Activated CD4-positive, alpha-beta T cell treated with anti-CD3 and anti-CD28 coated beads for 36 hours (primary cell): ENCODE measurements at regions of chr9 and their contacts with region 1.

Region 1: GRCh38 chr9:9585920-9586319 is 1026.9 kb downstream of the PTPRD start:
- DNase-seq: no peak
- ATAC-seq: no peak
- H3K4me3 Mint-ChIP-seq: no peak overlapping the region
- H3K27ac Mint-ChIP-seq: no peak overlapping the region
- H3K4me1 Mint-ChIP-seq: no peaks in the 10 kb centered on the region
- H3K27me3 Mint-ChIP-seq: no peaks in the 10 kb centered on the region

Region 2: DNA sequence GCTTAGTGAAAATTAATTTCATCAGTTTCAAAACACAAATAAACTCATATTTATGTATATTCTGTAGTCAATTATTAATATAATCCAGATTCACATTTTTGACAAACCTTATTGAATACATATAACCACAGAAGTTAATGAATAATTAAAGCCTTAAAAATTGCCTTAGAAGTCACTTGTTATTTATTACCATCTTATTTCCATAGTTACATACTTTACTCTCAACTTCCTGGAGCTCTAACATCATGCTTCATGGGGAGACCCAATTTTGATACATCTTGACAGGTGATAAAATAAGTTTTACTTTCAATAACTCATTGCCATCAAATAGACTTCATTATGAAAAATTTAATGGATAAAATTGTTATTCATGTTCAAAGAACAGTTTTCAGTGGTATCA is 11.8 kb before region 1 on chr9:
- CTCF ChIA-PET with region 1: no interaction called
- POLR2A ChIA-PET with region 1: no interaction called
- intact Hi-C with region 1: loop called in 1 of 2 experiments (anchors 1 kb)
- DNase-seq: no peak
- ATAC-seq: no peak
- H3K4me3 Mint-ChIP-seq: no peak overlapping the region
- H3K27ac Mint-ChIP-seq: no peak overlapping the region
- H3K4me1 Mint-ChIP-seq: no peaks in the 10 kb centered on the region
- H3K27me3 Mint-ChIP-seq: no peaks in the 10 kb centered on the region